ENCODE measurements at regions of chr15 and their contacts with region 1.

Region 1: GRCh38 chr15:85730001-85730820 is 64.5 kb downstream of the KLHL25 start:
- DNase-seq: no peak
- H3K4me3 ChIP-seq: no peak overlapping the region
- H3K27ac ChIP-seq: peak overlapping the region; percentile 41 to 83
- H3K4me1 ChIP-seq: peaks cover 3 to 7% of the 10 kb centered on the region in 2 donors
- H3K27me3 ChIP-seq: no peaks in the 10 kb centered on the region
- CTCF ChIP-seq: peak; percentile 70 to 72 (median 71)

Region 2: GRCh38 chr15:85330901-85331588 is 399.2 kb before region 1 on chr15:
- intact Hi-C with region 1: loop called (anchors 10 kb)
- DNase-seq: peak; percentile 67 to 95
- H3K4me3 ChIP-seq: no peak overlapping the region
- H3K27ac ChIP-seq: peak overlapping the region; percentile 80
- H3K4me1 ChIP-seq: peaks cover 2 to 9% of the 10 kb centered on the region in 2 donors
- H3K27me3 ChIP-seq: no peaks in the 10 kb centered on the region
- CTCF ChIP-seq: peak; percentile 70 to 85 (median 82)

Region 3: DNA sequence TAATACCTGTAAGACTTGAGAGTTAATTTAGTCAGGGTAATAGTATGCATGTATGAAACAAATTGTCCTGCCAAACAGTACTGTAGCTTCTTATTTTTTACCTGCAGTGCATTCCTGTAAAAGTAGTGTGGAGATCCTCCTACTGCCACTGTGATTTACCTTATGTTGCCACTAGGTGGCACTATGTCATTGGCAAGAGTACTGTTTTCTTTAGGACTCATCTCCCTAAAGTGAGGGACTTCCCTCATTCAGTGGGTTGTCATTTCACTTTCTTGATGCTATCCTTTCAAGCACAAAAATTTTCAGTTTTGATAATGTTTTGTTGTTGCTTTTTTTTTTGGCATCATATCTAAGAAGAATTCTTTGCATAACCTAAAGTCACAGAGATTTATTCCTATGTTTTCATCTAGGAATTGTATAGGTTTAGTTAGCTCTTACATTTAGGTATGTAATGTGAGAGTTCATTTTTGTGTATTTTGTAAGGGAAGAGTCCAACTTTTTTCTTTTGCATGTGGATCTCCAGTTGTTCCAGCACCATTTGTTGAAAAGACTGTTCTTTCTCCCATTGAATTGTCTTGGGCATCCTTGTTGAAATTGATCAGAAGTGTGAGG is 244.1 kb before region 1 on chr15:
- intact Hi-C with region 1: loop called (anchors 5 kb)
- DNase-seq: peak in 1 of 2 donors; percentile 67
- H3K4me3 ChIP-seq: no peak overlapping the region
- H3K27ac ChIP-seq: no peak overlapping the region
- H3K4me1 ChIP-seq: peaks cover 0 to 6% of the 10 kb centered on the region in 2 donors
- H3K27me3 ChIP-seq: no peaks in the 10 kb centered on the region
- CTCF ChIP-seq: peak; percentile 77 to 86 (median 79)

Region 4: DNA sequence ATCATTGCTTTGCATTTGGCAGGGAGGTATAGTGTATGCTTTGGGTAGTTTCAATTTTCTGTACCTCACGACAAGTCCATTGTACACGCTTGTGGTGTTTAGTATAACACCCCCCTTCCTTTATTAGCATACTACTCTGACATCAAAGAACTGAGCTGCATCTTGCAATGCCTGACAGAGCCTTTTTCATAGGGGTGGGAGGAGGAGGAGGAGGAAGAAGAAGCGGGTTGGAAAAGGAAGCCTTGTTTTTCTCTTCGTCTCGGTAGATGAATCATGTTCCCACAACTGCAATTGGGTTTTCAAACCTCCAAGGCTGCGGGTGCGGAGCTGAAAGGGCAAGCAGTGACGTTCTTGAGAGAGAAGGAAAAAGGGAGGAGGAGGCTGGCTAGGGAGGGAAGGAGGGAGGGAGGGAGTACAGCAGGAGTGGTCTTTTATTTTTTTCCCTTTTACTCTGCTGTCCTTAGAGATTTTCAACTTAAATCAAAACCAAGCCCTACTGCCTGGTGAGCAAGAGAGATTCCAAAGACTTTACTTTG is 111.2 kb before region 1 on chr15:
- intact Hi-C with region 1: loop called (anchors 5 kb)
- DNase-seq: peak; percentile 68 to 94
- H3K4me3 ChIP-seq: peak overlapping the region; percentile 58 to 74
- H3K27ac ChIP-seq: peak overlapping the region; percentile 85 to 86
- H3K4me1 ChIP-seq: peaks cover 16 to 36% of the 10 kb centered on the region in 2 donors
- H3K27me3 ChIP-seq: no peaks in the 10 kb centered on the region
- CTCF ChIP-seq: no peak

Region 5: DNA sequence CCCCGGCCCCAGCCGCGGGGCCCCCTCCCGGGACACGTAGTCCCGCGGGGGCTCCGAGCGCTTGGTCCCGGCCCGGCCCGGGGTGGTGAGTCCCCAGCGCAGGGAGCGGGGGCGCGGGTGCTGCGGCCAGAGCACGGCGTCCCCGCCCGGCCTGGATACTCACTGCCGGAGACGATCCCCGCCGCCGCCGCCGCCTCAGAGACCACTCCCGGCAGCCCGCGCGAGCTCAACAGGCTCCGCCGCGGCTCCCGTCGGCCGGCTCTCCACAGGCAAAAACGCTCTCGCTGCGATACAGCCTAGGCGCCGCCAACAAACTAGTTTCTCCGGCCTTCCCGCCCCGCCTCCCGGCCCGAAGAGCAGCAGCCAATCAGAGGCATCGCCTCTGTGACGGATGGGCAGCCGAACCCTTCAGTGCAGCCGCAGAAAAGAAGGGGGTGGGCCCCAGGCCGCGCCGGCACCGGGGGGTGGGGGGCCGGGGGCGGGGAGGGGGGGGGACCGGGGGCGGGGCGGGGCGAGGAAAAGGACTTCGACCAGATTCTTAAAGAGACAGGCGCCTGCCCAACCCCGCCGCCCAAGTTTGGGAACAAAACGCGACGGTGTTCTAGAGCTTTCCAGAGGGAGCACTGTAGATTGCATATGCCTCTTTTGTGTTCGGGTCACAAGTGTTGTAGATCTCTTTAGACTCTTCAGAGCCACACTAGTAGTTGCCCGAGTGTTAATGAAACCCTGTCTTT is 64.6 kb after region 1 on chr15 and contains the start of gene KLHL25:
- intact Hi-C with region 1: loop called (anchors 2 kb)
- DNase-seq: peak; percentile 82 to 97
- H3K4me3 ChIP-seq: peak within 1 kb of the TSS; percentile 75 to 77
- H3K27ac ChIP-seq: peak within 1 kb of the TSS; percentile 90 to 91
- H3K4me1 ChIP-seq: peaks cover 0 to 11% of the 10 kb centered on the region in 2 donors
- H3K27me3 ChIP-seq: no peaks in the 10 kb centered on the region
- CTCF ChIP-seq: no peak
- total RNA-seq, gene KLHL25: 12.6 TPM

Region 6: DNA sequence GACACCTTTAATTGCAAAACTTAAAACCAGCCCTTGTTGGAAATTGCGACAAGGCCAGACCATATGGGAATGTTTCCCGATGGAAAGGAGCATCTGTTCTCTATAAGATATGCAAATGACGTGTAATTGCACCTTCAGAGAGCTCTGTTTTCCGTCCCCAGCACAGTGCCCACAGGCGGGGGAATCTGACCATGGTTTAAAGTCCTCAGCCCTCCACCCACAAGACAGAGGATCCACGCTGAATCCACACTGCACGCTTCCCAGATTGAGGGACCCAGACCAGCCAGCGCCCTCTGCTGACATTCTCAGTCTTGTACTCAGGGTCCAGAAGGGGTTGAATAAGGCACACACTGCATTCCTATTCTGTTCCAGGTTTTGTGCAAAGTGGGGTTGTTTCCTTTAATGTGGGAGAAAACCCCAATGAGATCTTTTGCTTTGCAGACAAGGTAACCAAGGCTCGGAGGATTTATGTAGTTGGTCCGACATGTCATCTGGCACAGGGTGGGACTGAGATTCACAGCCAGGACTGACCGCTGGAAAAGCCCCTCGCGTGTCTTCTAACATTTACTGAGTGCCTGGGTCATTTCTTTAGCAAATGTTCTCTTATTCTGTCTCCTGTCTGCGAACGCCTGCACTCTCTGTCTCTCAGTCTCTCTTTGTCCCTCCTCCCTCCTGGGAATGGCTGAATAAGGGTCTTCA is 101.4 kb after region 1 on chr15:
- intact Hi-C with region 1: loop called (anchors 1 kb)
- DNase-seq: peak in 1 of 2 donors; percentile 76
- H3K4me3 ChIP-seq: no peak overlapping the region
- H3K27ac ChIP-seq: no peak overlapping the region
- H3K4me1 ChIP-seq: no peaks in the 10 kb centered on the region
- H3K27me3 ChIP-seq: no peaks in the 10 kb centered on the region
- CTCF ChIP-seq: peak; percentile 22 to 68 (median 51)

Region 7: DNA sequence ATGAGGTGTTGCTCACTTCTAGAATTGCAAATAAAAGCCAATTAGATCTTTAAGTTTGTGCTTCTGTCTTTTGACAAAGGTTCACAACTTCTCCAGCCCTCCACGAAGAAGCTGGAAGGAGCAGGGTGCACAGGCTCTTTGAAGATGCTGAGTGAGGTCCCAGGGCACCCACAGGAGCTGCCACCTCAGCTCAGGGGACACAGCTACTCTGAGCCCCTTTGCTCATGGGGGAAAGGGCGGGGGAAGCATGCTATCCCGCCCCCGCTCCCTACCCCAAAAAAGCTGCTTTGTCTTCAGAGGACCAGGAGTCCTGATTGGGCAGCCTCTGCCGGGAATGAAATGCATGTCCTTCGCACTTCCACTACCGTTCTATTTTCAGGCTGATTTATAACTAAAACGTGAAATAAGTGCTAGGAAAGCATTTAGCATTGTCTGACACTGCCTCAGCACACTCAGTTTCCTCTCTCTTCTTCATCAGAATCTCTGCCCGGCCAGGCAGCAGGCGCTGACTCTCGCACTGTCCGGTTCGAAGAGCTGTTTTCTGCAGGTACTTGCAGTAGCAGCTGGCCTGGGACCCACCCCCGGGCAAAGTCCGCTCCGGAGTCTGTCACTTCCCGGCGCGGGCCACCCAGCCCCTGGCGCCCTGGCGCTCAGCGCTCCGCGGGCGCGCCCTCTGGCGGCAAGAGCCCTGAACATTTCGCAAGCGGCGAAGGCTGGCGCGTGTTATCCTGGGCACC is 110.0 kb after region 1 on chr15:
- intact Hi-C with region 1: loop called (anchors 1 kb)
- DNase-seq: peak; percentile 36 to 89
- H3K4me3 ChIP-seq: peak overlapping the region; percentile 23 to 54
- H3K27ac ChIP-seq: no peak overlapping the region
- H3K4me1 ChIP-seq: peaks cover 0 to 3% of the 10 kb centered on the region in 2 donors
- H3K27me3 ChIP-seq: no peaks in the 10 kb centered on the region
- CTCF ChIP-seq: peak; percentile 86 to 96 (median 92)

Region 8: GRCh38 chr15:86362555-86362954 is 632.3 kb after region 1 on chr15:
- intact Hi-C with region 1: no loop called
- DNase-seq: no peak
- H3K4me3 ChIP-seq: no peak overlapping the region
- H3K27ac ChIP-seq: no peak overlapping the region
- H3K4me1 ChIP-seq: no peaks in the 10 kb centered on the region
- H3K27me3 ChIP-seq: no peaks in the 10 kb centered on the region
- CTCF ChIP-seq: no peak

Measured in ascending aorta (tissue), 2 donors.